CD4-positive, alpha-beta T cell (primary cell): ENCODE measurements at regions of chr6 and their contacts with region 1.

Region 1: GRCh38 chr6:26065952-26066380 is 21.3 kb upstream of the HFE start:
- DNase-seq: peak in 11 of 14 experiments; percentile 14 to 87 (median 39)
- ATAC-seq: peak; percentile 93
- H3K4me3 ChIP-seq: no peak overlapping the region
- H3K4me3 Mint-ChIP-seq: no peak overlapping the region
- H3K27ac ChIP-seq: no peak overlapping the region
- H3K27ac Mint-ChIP-seq: no peak overlapping the region
- H3K4me1 ChIP-seq: peaks cover 3% of the 10 kb centered on the region
- H3K4me1 Mint-ChIP-seq: peaks cover 11% of the 10 kb centered on the region
- H3K27me3 ChIP-seq: no peaks in the 10 kb centered on the region
- H3K27me3 Mint-ChIP-seq: no peaks in the 10 kb centered on the region
- CTCF ChIP-seq: peak; percentile 85

Region 2: GRCh38 chr6:26087284-26088115 is 21.5 kb after region 1 on chr6 and contains the start of gene HFE:
- CTCF ChIA-PET with region 1: interaction called, 39 read pairs
- POLR2A ChIA-PET with region 1: interaction called, 18 read pairs
- intact Hi-C with region 1: no loop called
- DNase-seq: peak in 11 of 14 experiments; percentile 3 to 57 (median 21)
- ATAC-seq: peak; percentile 25
- H3K4me3 ChIP-seq: peak within 1 kb of the TSS; percentile 86
- H3K4me3 Mint-ChIP-seq: peak within 1 kb of the TSS; percentile 87
- H3K27ac ChIP-seq: peak within 1 kb of the TSS; percentile 23 to 61
- H3K27ac Mint-ChIP-seq: peak within 1 kb of the TSS; percentile 71
- H3K4me1 ChIP-seq: peaks cover 33% of the 10 kb centered on the region
- H3K4me1 Mint-ChIP-seq: peaks cover 34% of the 10 kb centered on the region
- H3K27me3 ChIP-seq: no peaks in the 10 kb centered on the region
- H3K27me3 Mint-ChIP-seq: no peaks in the 10 kb centered on the region
- CTCF ChIP-seq: no peak
- total RNA-seq, gene HFE: 0.08 to 0.28 TPM

Region 3: DNA sequence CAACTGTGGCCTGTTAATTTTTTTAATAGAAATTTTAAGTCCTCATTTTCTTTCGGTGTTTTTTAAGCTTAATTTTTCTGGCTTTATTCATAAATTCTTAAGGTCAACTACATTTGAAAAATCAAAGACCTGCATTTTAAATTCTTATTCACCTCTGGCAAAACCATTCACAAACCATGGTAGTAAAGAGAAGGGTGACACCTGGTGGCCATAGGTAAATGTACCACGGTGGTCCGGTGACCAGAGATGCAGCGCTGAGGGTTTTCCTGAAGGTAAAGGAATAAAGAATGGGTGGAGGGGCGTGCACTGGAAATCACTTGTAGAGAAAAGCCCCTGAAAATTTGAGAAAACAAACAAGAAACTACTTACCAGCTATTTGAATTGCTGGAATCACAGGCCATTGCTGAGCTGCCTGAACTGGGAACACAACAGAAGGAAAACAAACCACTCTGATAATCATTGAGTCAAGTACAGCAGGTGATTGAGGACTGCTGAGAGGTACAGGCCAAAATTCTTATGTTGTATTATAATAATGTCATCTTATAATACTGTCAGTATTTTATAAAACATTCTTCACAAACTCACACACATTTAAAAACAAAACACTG is 31.4 kb after region 1 on chr6:
- CTCF ChIA-PET with region 1: interaction called, 33 read pairs
- POLR2A ChIA-PET with region 1: interaction called, 138 read pairs
- intact Hi-C with region 1: loop called (anchors 1 kb)
- DNase-seq: peak; percentile 50 to 87 (median 57)
- ATAC-seq: peak; percentile 86
- H3K4me3 ChIP-seq: no peak overlapping the region
- H3K4me3 Mint-ChIP-seq: no peak overlapping the region
- H3K27ac ChIP-seq: no peak overlapping the region
- H3K27ac Mint-ChIP-seq: no peak overlapping the region
- H3K4me1 ChIP-seq: no peaks in the 10 kb centered on the region
- H3K4me1 Mint-ChIP-seq: peaks cover 5% of the 10 kb centered on the region
- H3K27me3 ChIP-seq: no peaks in the 10 kb centered on the region
- H3K27me3 Mint-ChIP-seq: peaks cover 4% of the 10 kb centered on the region
- CTCF ChIP-seq: peak; percentile 78